H1 (cell line): ENCODE measurements at regions of chr1 and their contacts with region 1.

Region 1: GRCh38 chr1:146049436-146049835 is 27.9 kb upstream of the HJV start:
- DNase-seq: no peak
- H3K4me3 ChIP-seq: no peak overlapping the region
- H3K27ac ChIP-seq: no peak overlapping the region
- H3K4me1 ChIP-seq: no peaks in the 10 kb centered on the region
- H3K27me3 ChIP-seq: no peaks in the 10 kb centered on the region
- CTCF ChIP-seq: no peak
- EP300 ChIP-seq: no peak
- POLR2A ChIP-seq: no peak
- RAD21 ChIP-seq: no peak

Region 2: GRCh38 chr1:145927063-145927886 is 122.2 kb before region 1 on chr1 and contains the start of gene RBM8A:
- CTCF ChIA-PET with region 1: no interaction called
- POLR2A ChIA-PET with region 1: interaction called, 15 read pairs
- DNase-seq: peak; percentile 85 to 91
- H3K4me3 ChIP-seq: peak within 1 kb of the TSS; percentile 81 to 97 (median 92)
- H3K27ac ChIP-seq: peak within 1 kb of the TSS; percentile 90
- H3K4me1 ChIP-seq: peaks cover 0 to 4% (median 2%) of the 10 kb centered on the region in 4 experiments; a peak in 4 of 7 replicates
- H3K27me3 ChIP-seq: no peaks in the 10 kb centered on the region
- CTCF ChIP-seq: peak; percentile 27 to 61 (median 47); a peak in 3 of 4 replicates
- EP300 ChIP-seq: no peak
- POLR2A ChIP-seq: peak; percentile 88 to 92
- RAD21 ChIP-seq: no peak
- total RNA-seq, gene RBM8A: 216 and 222 TPM in 2 replicates

Region 3: DNA sequence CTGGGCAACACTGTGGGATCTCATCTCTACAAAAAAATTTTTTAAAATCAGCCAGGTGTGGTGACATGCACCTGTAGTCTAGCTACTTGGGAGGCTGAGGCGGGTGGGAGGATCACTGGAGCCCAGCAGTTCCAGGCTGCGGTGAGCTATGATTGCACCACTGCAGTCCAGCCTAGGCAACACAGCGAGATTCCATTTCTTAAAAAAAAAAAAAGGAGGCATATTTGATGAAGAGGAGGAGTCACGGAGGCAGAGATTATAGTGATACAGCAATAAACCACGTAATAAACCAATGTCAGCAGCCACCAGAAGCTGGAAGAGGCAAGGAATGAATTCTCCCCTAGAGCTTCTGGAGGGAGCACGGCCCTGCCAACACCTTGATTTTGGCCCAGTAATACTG is 95.6 kb before region 1 on chr1:
- CTCF ChIA-PET with region 1: no interaction called
- POLR2A ChIA-PET with region 1: no interaction called
- DNase-seq: no peak
- H3K4me3 ChIP-seq: no peak overlapping the region
- H3K27ac ChIP-seq: no peak overlapping the region
- H3K4me1 ChIP-seq: peaks cover 0 to 5% (median 0%) of the 10 kb centered on the region in 4 experiments; a peak in 2 of 7 replicates
- H3K27me3 ChIP-seq: peaks cover 0 to 34% (median 20%) of the 10 kb centered on the region in 4 experiments; a peak in 6 of 7 replicates
- CTCF ChIP-seq: no peak
- EP300 ChIP-seq: no peak
- POLR2A ChIP-seq: no peak
- RAD21 ChIP-seq: no peak

Region 4: GRCh38 chr1:145963995-145964901 is 85.2 kb before region 1 on chr1 and contains the starts of genes ANKRD34A and POLR3GL:
- CTCF ChIA-PET with region 1: no interaction called
- POLR2A ChIA-PET with region 1: interaction called, 21 read pairs
- DNase-seq: peak; percentile 87 to 94
- H3K4me3 ChIP-seq: peak within 1 kb of the TSS; percentile 54 to 81 (median 68)
- H3K27ac ChIP-seq: no peak within 1 kb of the TSS
- H3K4me1 ChIP-seq: peaks cover 0 to 17% (median 11%) of the 10 kb centered on the region in 4 experiments; a peak in 6 of 7 replicates
- H3K27me3 ChIP-seq: peaks cover 25 to 44% (median 42%) of the 10 kb centered on the region in 4 experiments
- CTCF ChIP-seq: no peak
- EP300 ChIP-seq: no peak
- POLR2A ChIP-seq: peak in 1 of 2 experiments; percentile 75; a peak in 2 of 3 replicates
- RAD21 ChIP-seq: no peak
- total RNA-seq, gene ANKRD34A: 0.20 and 0.46 TPM in 2 replicates
- total RNA-seq, gene POLR3GL: 2.3 and 3.1 TPM in 2 replicates

Region 5: DNA sequence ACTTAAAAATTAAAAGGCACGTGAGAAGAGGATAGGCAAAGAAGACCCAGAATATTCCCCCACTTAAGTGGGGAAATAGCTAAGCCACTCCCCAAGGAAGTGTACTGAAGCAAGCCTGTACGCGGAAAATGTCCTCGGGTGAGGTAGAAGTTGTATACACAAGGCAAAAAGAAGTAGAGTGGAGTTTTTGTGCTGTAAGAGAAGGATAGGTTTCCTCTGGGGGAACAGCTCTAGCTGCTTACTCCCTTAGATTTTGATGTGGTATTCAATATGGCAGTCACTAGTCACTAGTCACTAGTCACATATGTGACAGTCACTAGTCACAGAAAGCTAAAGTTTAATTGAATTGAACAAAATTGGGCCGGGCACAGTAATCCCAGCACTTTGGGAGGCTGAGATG is 60.7 kb before region 1 on chr1:
- CTCF ChIA-PET with region 1: no interaction called
- POLR2A ChIA-PET with region 1: interaction called, 10 read pairs
- DNase-seq: no peak
- H3K4me3 ChIP-seq: no peak overlapping the region
- H3K27ac ChIP-seq: no peak overlapping the region
- H3K4me1 ChIP-seq: peaks cover 0 to 6% (median 3%) of the 10 kb centered on the region in 4 experiments; a peak in 6 of 7 replicates
- H3K27me3 ChIP-seq: no peaks in the 10 kb centered on the region
- CTCF ChIP-seq: no peak
- EP300 ChIP-seq: no peak
- POLR2A ChIP-seq: no peak
- RAD21 ChIP-seq: no peak

Region 6: GRCh38 chr1:146019231-146020057 is 30.0 kb before region 1 on chr1:
- CTCF ChIA-PET with region 1: no interaction called
- POLR2A ChIA-PET with region 1: interaction called, 29 read pairs
- DNase-seq: peak in 1 of 2 experiments; percentile 80
- H3K4me3 ChIP-seq: peak overlapping the region; percentile 31 to 58 (median 39)
- H3K27ac ChIP-seq: no peak overlapping the region
- H3K4me1 ChIP-seq: peaks cover 4 to 9% (median 6%) of the 10 kb centered on the region in 4 experiments
- H3K27me3 ChIP-seq: peaks cover 6 to 30% (median 24%) of the 10 kb centered on the region in 4 experiments
- CTCF ChIP-seq: peak in 1 of 3 experiments; percentile 0; a peak in 1 of 4 replicates
- EP300 ChIP-seq: no peak
- POLR2A ChIP-seq: peak in 1 of 2 experiments; percentile 54; a peak in 1 of 3 replicates
- RAD21 ChIP-seq: peak in 1 of 2 experiments; percentile 22; a peak in 1 of 4 replicates

Region 7: DNA sequence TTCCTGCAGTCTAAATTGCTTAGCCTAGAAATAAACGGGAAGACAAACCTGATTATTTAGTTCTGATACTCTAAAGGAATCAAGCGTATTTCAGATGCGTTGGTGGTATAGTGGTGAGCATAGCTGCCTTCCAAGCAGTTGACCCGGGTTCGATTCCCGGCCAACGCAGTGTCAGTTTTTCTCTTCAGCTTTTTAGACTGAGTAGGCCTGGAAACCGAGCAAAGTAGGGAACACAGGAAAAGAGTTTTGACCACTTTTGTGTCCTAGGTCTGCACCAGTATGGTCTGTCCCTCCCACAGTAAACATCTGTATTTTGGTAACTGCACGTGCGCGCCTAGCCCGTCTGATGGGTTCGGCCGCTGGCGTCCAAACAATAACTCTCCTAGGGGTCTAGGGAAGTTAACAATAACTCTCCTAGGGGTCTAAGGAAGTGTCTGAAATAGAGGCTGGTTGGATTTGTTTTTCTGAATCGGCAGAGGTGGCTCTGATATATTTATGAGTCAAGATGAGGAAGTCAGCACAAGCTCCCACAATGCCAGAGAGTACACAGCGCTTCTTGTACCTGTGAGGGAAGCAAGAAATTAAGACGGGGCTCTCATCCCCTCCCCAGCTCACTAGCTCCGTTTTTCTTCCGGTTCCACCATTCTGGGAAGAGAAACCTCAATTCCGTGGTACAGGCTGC is 12.3 kb before region 1 on chr1:
- CTCF ChIA-PET with region 1: interaction called, 9 read pairs
- POLR2A ChIA-PET with region 1: interaction called, 284 read pairs
- DNase-seq: peak in 1 of 2 experiments; percentile 87
- H3K4me3 ChIP-seq: peak overlapping the region; percentile 73 to 93 (median 88)
- H3K27ac ChIP-seq: peak overlapping the region; percentile 40
- H3K4me1 ChIP-seq: peaks cover 0 to 3% (median 0%) of the 10 kb centered on the region in 4 experiments; a peak in 1 of 7 replicates
- H3K27me3 ChIP-seq: no peaks in the 10 kb centered on the region
- CTCF ChIP-seq: no peak
- EP300 ChIP-seq: no peak
- POLR2A ChIP-seq: no peak
- RAD21 ChIP-seq: no peak